ENCODE measurements at regions of chr20 and their contacts with region 1.

Region 1: DNA sequence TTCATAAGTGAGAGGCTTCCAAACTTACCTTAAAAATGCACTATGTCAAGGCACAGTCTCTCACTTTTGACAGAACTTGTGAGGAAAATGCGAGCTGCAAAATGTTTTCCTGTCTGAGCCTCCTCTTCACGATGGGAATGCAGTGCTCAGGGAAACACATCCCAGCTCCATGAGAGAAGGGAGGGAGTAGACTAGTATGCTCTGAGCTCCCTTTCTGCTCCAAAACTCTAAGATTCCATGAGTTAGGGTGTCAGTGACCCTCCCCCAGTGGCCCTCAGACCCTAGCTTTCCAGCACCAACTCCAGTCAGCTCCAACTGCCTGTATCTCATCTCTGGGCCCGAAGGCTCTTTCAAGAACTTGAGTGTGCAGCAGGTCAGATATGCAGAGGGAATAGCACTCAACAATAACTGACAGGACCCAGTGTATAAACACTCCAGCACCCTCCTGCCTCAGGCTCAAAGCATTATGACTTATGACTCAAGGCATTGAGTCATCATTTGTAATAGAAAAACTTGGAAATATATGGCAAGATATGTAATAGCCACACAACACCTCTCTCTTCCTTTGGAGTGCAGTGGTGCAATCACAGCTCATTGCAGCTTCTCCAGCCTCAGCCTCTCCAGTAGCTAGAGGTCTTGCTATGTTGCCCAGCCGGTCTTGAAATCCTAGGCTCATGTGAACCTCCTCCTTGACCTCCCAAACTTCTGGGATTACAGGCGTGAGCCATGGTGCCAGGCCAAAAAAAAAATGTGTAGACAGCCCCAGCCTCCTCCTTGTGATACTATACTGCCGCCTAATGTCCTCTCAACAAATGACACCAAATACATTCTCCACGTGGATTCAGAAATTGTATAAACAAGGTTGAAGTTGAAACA is 16.7 kb upstream of the ENTPD6 start:
- DNase-seq: peak; percentile 80
- H3K4me3 ChIP-seq: no peak overlapping the region
- H3K27ac ChIP-seq: peak overlapping the region; percentile 50 to 68 (median 58)
- H3K4me1 ChIP-seq: peaks cover 0 to 24% (median 15%) of the 10 kb centered on the region in 4 donors
- H3K27me3 ChIP-seq: no peaks in the 10 kb centered on the region
- CTCF ChIP-seq: peak; percentile 60 to 78 (median 69)
- EP300 ChIP-seq: no peak
- POLR2A ChIP-seq: no peak

Region 2: DNA sequence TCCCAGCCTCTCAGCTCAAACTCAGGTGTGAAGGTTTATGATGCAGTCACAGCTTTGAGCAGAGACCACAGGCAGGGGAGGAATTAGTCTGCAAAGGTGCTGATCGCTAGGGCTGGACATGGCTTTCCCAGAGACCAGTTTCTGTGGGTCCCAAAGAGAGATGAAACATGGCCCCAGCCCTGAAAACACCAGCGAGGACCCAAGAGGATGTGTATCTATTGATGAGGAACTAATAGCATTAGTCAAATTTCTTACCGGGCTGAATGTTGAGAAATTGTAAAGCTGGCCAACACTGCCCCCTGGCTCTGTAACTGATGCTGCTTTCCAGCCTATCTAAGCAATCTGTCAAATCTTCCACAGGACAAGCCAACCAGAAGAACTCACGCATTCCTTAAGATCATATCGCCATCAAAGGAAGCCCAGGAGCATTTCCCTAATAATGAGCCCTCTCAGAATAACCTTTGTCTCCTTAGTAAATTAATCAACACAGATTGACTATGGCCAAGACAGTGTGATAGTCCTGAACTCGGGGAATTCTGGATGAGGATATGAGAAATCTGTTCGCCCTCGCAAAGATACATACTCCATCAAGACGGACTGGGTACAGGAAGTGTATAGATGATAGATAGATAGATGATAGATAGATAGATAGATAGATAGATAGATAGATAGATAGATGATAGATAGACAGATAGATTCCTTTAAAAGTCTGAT is 113.0 kb before region 1 on chr20:
- intact Hi-C with region 1: loop called (anchors 5 kb)
- DNase-seq: peak; percentile 81
- H3K4me3 ChIP-seq: no peak overlapping the region
- H3K27ac ChIP-seq: no peak overlapping the region
- H3K4me1 ChIP-seq: peaks cover 0 to 7% (median 3%) of the 10 kb centered on the region in 4 donors
- H3K27me3 ChIP-seq: peaks cover 0 to 9% (median 0%) of the 10 kb centered on the region in 3 donors
- CTCF ChIP-seq: peak; percentile 75 to 89 (median 84)
- EP300 ChIP-seq: no peak
- POLR2A ChIP-seq: no peak

Region 3: DNA sequence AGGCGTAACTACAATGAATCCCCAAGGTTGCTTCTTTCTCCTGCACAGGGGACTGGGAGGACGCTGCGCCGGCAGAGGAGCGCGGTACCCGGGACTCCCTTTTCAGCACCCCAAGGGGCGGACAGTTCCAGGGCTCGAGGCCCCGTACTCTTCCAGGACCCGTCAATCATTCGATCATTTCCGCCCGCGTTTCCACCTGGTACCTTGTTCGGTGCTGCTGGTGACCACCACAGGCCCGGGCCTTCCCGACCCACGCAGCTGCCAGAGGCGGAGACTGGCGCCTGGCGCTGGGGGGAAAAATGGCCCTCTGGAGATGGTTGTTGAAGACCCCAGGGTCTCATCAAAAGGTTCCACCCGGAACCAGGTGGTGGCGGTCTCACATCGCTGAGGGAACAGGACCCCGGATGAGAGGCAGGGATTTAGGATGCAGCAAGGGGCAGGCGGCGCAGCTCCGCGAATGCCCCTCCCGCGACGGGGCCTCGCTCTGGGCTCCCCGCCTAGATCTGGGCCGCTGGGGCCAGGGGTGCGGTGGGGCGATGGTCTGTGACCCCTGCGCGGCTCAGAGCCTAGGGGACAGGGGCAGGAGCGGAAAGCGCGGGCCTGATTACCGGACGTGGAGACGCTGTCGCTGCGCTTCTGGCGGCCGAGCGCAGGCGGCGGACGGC is 97.6 kb before region 1 on chr20:
- intact Hi-C with region 1: loop called (anchors 5 kb)
- DNase-seq: no peak
- H3K4me3 ChIP-seq: no peak overlapping the region
- H3K27ac ChIP-seq: no peak overlapping the region
- H3K4me1 ChIP-seq: peaks cover 0 to 44% (median 34%) of the 10 kb centered on the region in 4 donors
- H3K27me3 ChIP-seq: peaks cover 44 to 89% (median 56%) of the 10 kb centered on the region in 3 donors
- CTCF ChIP-seq: no peak
- EP300 ChIP-seq: no peak
- POLR2A ChIP-seq: no peak

Region 4: DNA sequence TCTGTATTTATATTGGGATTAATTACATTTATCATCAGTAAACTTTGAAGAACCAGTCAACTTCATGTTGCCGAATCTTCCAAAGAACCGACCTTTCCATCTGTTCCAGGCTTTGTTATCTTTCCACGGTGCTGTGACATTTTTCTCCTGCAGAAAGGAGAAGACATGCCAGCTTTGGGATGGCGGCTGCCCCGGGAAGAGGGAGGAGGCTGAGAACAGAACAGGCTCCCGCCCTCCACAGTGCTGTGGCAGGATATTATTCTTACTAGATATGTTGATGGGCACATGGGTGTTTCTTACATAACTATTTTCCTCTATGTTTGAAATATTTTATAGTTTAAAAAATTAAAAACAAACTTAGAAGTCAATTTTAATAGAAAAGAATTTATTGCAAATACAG is 273.5 kb after region 1 on chr20:
- intact Hi-C with region 1: no loop called
- DNase-seq: no peak
- H3K4me3 ChIP-seq: no peak overlapping the region
- H3K27ac ChIP-seq: no peak overlapping the region
- H3K4me1 ChIP-seq: peaks cover 0 to 7% (median 0%) of the 10 kb centered on the region in 4 donors
- H3K27me3 ChIP-seq: no peaks in the 10 kb centered on the region
- CTCF ChIP-seq: no peak
- EP300 ChIP-seq: no peak
- POLR2A ChIP-seq: no peak

Measured in sigmoid colon (tissue), 7 donors.